ENCODE measurements at regions of chr4 and their contacts with region 1.

Region 1: GRCh38 chr4:74038161-74039064 is at the start of gene CXCL3:
- DNase-seq: peak; percentile 67
- H3K4me3 ChIP-seq: peak within 1 kb of the TSS; percentile 75 to 86 (median 82)
- H3K27ac ChIP-seq: peak within 1 kb of the TSS; percentile 88
- H3K4me1 ChIP-seq: peaks cover 11% of the 10 kb centered on the region
- H3K27me3 ChIP-seq: no peaks in the 10 kb centered on the region
- CTCF ChIP-seq: peak; percentile 23 to 44
- POLR2A ChIP-seq: peak; percentile 22
- total RNA-seq, gene CXCL3: 1.3 and 1.4 TPM in 2 replicates

Region 2: GRCh38 chr4:73653695-73654106 is 384.7 kb before region 1 on chr4:
- CTCF ChIA-PET with region 1: interaction called, 13 read pairs
- POLR2A ChIA-PET with region 1: no interaction called
- dilution Hi-C with region 1: no loop called
- intact Hi-C with region 1: no loop called
- DNase-seq: peak; percentile 91
- H3K4me3 ChIP-seq: no peak overlapping the region
- H3K27ac ChIP-seq: no peak overlapping the region
- H3K4me1 ChIP-seq: no peaks in the 10 kb centered on the region
- H3K27me3 ChIP-seq: no peaks in the 10 kb centered on the region
- CTCF ChIP-seq: peak; percentile 33 to 41
- POLR2A ChIP-seq: no peak

Region 3: DNA sequence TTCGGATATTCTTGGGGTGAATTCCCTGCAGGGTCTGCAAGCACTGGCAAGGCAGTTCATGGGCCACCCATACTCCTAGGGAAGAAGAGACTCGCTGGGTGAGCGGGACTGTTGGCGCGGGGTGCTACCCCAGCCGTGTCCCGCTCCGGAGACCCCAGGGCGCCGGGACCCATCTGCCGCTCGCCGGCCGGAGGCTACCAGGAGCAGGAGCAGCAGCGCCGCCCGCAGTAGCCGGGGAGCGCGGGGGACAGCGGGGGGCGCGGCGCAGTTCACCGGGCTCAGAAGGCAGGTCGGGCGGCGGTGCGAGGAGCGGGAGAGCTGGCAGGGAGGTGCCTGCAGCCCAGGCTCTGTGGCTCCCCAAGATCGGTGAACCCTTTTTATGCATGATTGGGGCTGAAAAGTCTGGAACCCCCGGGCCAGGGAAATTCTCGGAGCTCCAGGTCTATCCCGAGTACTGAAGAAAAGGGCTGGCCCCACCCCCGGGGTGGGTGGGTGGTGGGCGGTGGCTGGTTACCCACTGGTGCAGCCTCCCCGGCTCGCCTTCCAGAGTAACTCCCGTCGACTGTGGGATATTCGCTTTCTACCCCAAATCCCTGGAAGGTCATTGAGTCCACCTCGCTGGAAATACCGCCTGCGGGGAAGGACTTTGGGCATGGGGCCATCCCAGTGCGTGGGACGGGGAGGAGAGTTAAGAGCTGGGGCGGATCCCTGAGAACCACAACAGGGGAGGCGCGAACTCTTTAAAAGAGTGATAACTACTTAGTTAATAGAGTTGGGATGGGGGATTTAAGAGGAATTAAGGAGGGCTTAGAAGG is 94.1 kb before region 1 on chr4:
- CTCF ChIA-PET with region 1: interaction called, 4 read pairs
- POLR2A ChIA-PET with region 1: no interaction called
- dilution Hi-C with region 1: no loop called
- intact Hi-C with region 1: loop called (anchors 5 kb)
- DNase-seq: peak; percentile 24
- H3K4me3 ChIP-seq: peak overlapping the region; percentile 53 to 62 (median 59)
- H3K27ac ChIP-seq: no peak overlapping the region
- H3K4me1 ChIP-seq: peaks cover 5% of the 10 kb centered on the region
- H3K27me3 ChIP-seq: peaks cover 0 to 3% of the 10 kb centered on the region in 2 experiments
- CTCF ChIP-seq: peak in 1 of 2 donors; percentile 12
- POLR2A ChIP-seq: no peak

Region 4: DNA sequence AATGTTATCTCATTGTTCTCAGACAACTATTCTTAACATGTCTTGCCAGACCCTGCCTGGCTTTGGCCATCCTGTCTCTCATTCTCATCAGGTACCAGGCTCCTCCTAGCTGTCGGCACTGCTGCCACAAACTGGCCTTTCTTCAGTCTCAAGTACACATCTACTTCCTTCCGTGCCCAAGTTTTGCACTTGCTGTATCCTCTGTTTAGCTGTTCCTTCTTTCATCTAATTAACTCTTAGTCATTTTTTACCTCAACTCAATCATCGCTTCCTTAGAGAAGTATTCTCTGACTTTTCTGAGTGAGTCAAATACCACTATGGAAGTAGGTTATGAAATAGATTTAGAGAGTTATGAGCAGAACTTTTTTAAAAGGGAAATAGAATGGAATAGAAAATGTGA is 19.6 kb before region 1 on chr4:
- CTCF ChIA-PET with region 1: interaction called, 14 read pairs
- POLR2A ChIA-PET with region 1: no interaction called
- dilution Hi-C with region 1: no loop called
- intact Hi-C with region 1: no loop called
- DNase-seq: peak; percentile 21
- H3K4me3 ChIP-seq: no peak overlapping the region
- H3K27ac ChIP-seq: no peak overlapping the region
- H3K4me1 ChIP-seq: peaks cover 6% of the 10 kb centered on the region
- H3K27me3 ChIP-seq: peaks cover 0 to 5% of the 10 kb centered on the region in 2 experiments
- CTCF ChIP-seq: no peak
- POLR2A ChIP-seq: no peak

Region 5: DNA sequence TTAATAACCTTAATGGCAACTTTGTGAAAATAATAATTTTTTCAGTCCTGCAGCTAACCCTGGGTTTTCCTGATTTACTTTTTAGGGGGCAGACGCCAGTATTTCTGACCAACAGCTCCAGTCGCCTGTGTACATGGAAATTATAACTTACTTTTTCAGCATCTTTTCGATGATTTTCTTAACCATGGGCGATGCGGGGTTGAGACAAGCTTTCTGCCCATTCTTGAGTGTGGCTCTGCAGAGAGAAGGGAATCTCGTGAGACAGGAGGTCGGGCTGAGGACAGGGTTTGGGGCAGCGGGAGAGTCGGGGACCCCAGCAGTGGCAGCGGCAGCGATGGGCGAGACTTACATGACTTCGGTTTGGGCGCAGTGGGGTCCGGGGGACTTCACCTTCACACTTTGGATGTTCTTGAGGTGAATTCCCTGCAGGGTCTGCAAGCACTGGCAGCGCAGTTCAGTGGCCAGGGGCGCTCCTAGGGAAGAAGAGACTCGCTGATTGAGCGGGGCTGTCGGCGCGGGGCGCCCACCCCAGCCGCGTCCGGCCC is 60.1 kb after region 1 on chr4:
- CTCF ChIA-PET with region 1: interaction called, 33 read pairs
- POLR2A ChIA-PET with region 1: interaction called, 8 read pairs
- dilution Hi-C with region 1: no loop called
- intact Hi-C with region 1: loop called (anchors 2 kb)
- DNase-seq: peak; percentile 38
- H3K4me3 ChIP-seq: peak overlapping the region; percentile 46 to 85 (median 69)
- H3K27ac ChIP-seq: peak overlapping the region; percentile 83
- H3K4me1 ChIP-seq: peaks cover 32% of the 10 kb centered on the region
- H3K27me3 ChIP-seq: no peaks in the 10 kb centered on the region
- CTCF ChIP-seq: no peak
- POLR2A ChIP-seq: no peak

Measured in endothelial cell of umbilical vein (primary cell).